ENCODE measurements at regions of chr4 and their contacts with region 1.

Region 1: GRCh38 chr4:26319467-26319948 is 1.3 kb upstream of the RBPJ start:
- DNase-seq: peak; percentile 96 to 98
- ATAC-seq: peak; percentile 92 to 98 (median 94)
- H3K4me3 ChIP-seq: peak overlapping the region; percentile 57 to 90 (median 78)
- H3K27ac ChIP-seq: peak overlapping the region; percentile 85 to 96 (median 93)
- H3K4me1 ChIP-seq: peaks cover 0 to 45% (median 29%) of the 10 kb centered on the region in 9 donors
- H3K27me3 ChIP-seq: no peaks in the 10 kb centered on the region
- CTCF ChIP-seq: peak in 3 of 9 donors; percentile 20 to 36 (median 33)

Region 2: GRCh38 chr4:25749150-25749794 is 570.2 kb before region 1 on chr4:
- intact Hi-C with region 1: no loop called
- DNase-seq: no peak
- ATAC-seq: no peak
- H3K4me3 ChIP-seq: no peak overlapping the region
- H3K27ac ChIP-seq: no peak overlapping the region
- H3K4me1 ChIP-seq: no peaks in the 10 kb centered on the region
- H3K27me3 ChIP-seq: no peaks in the 10 kb centered on the region
- CTCF ChIP-seq: no peak

Region 3: DNA sequence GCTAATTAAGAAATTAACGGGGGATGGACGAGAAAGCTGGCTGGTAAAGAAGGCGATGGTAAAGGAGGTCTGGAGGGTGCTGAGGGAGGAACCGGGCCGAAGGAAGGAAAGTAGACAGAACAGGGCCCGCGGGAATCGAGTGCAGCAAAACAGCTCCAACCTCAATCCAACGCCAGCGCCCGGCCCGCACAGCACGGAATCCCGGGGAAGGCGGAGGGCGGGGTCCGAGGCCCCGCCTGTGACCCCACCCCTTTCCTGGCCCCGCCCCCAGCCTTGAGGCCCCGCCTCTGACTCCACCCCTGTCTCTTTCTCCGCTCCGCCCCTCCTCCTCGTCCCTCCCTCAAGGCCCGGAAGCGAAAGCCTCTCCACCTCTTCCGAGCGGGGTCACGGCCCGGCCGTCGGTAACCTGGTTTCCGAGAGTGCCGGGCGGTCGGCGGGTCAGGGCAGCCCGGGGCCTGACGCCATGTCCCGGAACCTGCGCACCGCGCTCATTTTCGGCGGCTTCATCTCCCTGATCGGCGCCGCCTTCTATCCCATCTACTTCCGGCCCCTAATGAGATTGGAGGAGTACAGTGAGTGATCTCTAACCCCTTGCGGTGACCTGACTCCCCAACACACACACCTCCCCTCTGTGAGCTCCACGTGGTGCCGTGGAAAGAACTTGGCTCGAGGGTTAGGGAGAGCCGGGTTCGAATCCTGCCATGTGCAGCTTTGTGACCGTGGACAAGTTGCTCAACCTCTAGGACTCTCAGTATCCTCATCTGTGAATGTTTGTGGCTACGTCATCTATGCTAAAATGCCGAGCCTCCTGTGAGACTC is 405.4 kb before region 1 on chr4 and contains the start of gene SMIM20:
- intact Hi-C with region 1: loop called in 2 of 10 experiments (anchors 10 kb)
- DNase-seq: peak; percentile 90 to 92
- ATAC-seq: peak; percentile 98 to 99 (median 99)
- H3K4me3 ChIP-seq: peak within 1 kb of the TSS; percentile 29 to 83 (median 68)
- H3K27ac ChIP-seq: peak within 1 kb of the TSS; percentile 61 to 93 (median 86)
- H3K4me1 ChIP-seq: peaks cover 0 to 26% (median 17%) of the 10 kb centered on the region in 9 donors
- H3K27me3 ChIP-seq: no peaks in the 10 kb centered on the region
- CTCF ChIP-seq: peak in 1 of 9 donors; percentile 5
- total RNA-seq, gene SMIM20: 31.6 to 48.5 (median 44.1) TPM

Region 4: GRCh38 chr4:25925486-25926201 is 393.9 kb before region 1 on chr4:
- intact Hi-C with region 1: loop called in 3 of 10 experiments (anchors 5 to 10 kb)
- DNase-seq: peak; percentile 28 to 37
- ATAC-seq: peak in 2 of 8 donors; percentile 47 to 49
- H3K4me3 ChIP-seq: no peak overlapping the region
- H3K27ac ChIP-seq: no peak overlapping the region
- H3K4me1 ChIP-seq: peaks cover 0 to 64% (median 32%) of the 10 kb centered on the region in 9 donors
- H3K27me3 ChIP-seq: no peaks in the 10 kb centered on the region
- CTCF ChIP-seq: peak; percentile 30 to 67 (median 56)

Region 5: DNA sequence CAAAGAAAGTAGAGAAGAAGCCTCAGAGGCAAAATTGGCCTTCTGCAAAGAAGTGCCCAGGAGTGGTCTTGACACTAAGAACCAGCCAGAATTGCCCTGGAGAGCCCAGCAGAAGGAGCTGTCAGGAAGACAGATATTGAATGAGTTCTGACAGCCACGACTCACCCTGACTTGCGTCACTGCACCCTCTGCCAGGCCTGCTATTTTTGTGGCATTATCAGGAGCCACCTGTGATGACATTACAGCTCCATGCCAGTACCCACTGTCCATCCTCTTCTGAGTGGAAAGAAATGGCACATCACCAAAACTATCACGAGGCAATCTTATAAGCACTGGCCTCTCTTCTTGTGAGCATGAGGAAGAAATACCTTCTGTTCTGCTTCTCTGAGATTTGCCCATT is 337.8 kb before region 1 on chr4:
- intact Hi-C with region 1: loop called in 1 of 10 experiments (anchors 10 kb)
- DNase-seq: peak; percentile 39 to 41
- ATAC-seq: peak in 6 of 8 donors; percentile 73 to 96 (median 94)
- H3K4me3 ChIP-seq: no peak overlapping the region
- H3K27ac ChIP-seq: peak overlapping the region in 1 of 10 donors; percentile 44
- H3K4me1 ChIP-seq: peaks cover 0 to 7% (median 0%) of the 10 kb centered on the region in 9 donors
- H3K27me3 ChIP-seq: no peaks in the 10 kb centered on the region
- CTCF ChIP-seq: no peak

Region 6: GRCh38 chr4:25993395-25994185 is 325.9 kb before region 1 on chr4:
- intact Hi-C with region 1: loop called in 3 of 10 experiments (anchors 5 to 10 kb)
- DNase-seq: peak; percentile 32 to 35
- ATAC-seq: peak; percentile 46 to 82 (median 68)
- H3K4me3 ChIP-seq: no peak overlapping the region
- H3K27ac ChIP-seq: peak overlapping the region in 3 of 10 donors; percentile 8 to 35 (median 22)
- H3K4me1 ChIP-seq: peaks cover 0 to 23% (median 0%) of the 10 kb centered on the region in 9 donors
- H3K27me3 ChIP-seq: no peaks in the 10 kb centered on the region
- CTCF ChIP-seq: peak in 6 of 9 donors; percentile 24 to 41 (median 34)

Region 7: DNA sequence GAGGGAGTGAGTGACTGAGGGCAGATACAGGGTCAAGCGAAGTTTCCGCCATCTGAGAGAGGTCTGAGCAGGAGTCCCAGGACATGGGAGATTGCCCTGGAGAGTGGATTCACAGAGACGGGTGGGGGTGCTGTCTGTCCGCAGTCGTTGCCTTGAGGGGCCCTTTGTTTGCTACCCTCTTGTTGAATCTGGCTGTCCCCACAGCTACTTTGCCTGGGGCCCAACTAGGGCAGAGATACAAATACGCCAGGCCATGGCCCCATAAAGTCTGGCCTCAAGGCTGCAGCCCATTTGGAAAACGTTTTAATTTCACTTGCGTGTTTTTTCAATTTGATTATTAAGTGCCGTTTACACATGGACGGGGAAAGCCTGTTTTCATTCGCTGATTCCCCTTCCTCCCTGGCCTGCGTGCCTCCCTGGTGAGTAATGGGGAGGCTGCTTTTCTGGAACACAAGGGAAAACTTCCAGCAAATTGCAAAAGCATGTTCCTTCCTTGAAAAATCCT is 271.1 kb before region 1 on chr4:
- intact Hi-C with region 1: loop called in 1 of 10 experiments (anchors 10 kb)
- DNase-seq: peak; percentile 38 to 45
- ATAC-seq: peak in 7 of 8 donors; percentile 66 to 83 (median 77)
- H3K4me3 ChIP-seq: peak overlapping the region in 1 of 10 donors; percentile 5
- H3K27ac ChIP-seq: peak overlapping the region; percentile 18 to 84 (median 69)
- H3K4me1 ChIP-seq: peaks cover 0 to 46% (median 10%) of the 10 kb centered on the region in 9 donors
- H3K27me3 ChIP-seq: peaks cover 0 to 5% (median 0%) of the 10 kb centered on the region in 7 donors
- CTCF ChIP-seq: no peak

Region 8: GRCh38 chr4:26081795-26082498 is 237.6 kb before region 1 on chr4:
- intact Hi-C with region 1: loop called in 7 of 10 experiments (anchors 5 to 10 kb)
- DNase-seq: no peak
- ATAC-seq: peak in 7 of 8 donors; percentile 44 to 66 (median 53)
- H3K4me3 ChIP-seq: no peak overlapping the region
- H3K27ac ChIP-seq: peak overlapping the region in 1 of 10 donors; percentile 34
- H3K4me1 ChIP-seq: peaks cover 0 to 52% (median 0%) of the 10 kb centered on the region in 9 donors
- H3K27me3 ChIP-seq: peaks cover 0 to 11% (median 2%) of the 10 kb centered on the region in 7 donors
- CTCF ChIP-seq: peak; percentile 60 to 82 (median 72)